PC-3 (cell line): ENCODE measurements at regions of chr9 and their contacts with region 1.

Region 1: DNA sequence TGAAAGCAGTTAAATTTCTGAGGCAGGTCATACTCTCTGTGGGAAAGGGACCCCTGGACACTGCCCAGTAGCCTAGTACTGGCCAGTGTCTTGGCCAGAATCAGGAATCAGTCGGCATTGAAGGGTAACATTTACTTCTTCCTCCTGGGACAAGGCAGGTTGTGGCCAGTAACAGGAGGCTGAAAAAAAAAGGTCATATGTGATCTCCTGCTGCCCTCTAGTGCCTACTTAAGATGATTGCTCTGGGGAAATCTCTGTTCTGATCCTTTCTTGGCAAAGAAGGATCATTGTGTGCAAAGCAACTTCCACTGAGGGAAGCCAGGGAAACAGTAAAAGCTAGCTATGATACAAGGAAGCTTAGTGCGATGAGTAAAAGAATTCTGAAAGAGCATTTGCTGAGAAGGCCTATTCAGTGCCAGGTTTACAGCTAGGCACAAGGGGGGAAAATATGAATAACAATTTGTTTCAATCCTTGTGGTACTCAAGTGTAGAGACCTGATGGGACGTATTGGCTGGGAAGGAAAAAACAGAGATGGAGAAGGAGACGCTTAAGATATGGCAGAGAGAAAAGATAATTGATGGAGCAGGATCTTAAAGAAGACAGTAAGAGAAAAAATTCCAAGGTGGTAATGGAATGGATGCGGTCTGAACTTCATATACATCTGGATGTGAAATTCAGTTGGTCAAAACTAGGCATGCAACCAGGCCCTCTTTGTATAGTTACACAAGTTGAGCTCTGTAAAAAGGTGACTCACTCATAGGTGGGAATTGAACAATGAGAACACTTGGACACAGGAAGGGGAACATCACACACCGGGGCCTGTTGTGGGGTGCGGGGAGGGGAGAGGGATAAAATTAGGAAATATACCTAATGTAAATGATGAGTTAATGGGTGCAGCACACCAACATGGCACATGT is 25.8 kb upstream of the TRIM32 start:
- DNase-seq: peak; percentile 58
- ATAC-seq: peak; percentile 81
- H3K4me3 ChIP-seq: no peak overlapping the region
- H3K27ac ChIP-seq: no peak overlapping the region
- H3K4me1 ChIP-seq: peaks cover 7% of the 10 kb centered on the region; the same call in 1 of the 2 replicates
- H3K27me3 ChIP-seq: no peaks in the 10 kb centered on the region
- CTCF ChIP-seq: peak; percentile 78

Region 2: DNA sequence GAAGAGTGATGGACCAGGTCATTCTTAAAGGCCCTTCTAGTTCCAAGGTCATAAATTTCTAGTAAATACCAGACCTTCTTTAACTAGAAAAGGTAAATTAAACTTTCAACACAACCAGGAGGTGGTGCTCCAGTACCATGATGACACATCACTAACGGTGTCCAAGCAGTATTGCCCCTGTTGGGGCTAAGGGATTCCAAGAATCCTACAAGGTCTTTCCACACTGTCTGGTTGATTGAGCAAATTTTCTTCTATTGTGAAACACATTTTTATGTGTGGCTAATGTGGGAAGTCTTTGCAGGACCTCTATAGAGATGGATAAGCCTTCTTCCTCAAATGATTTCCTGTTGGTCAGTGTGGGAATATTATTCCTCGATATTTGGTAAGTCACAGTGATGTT is 967.3 kb before region 1 on chr9:
- CTCF ChIA-PET with region 1: no interaction called
- POLR2A ChIA-PET with region 1: no interaction called
- intact Hi-C with region 1: loop called (anchors 2 kb)
- DNase-seq: peak; percentile 61
- ATAC-seq: no peak; the same call in 1 of the 2 replicates
- H3K4me3 ChIP-seq: no peak overlapping the region
- H3K27ac ChIP-seq: no peak overlapping the region
- H3K4me1 ChIP-seq: peaks cover 21% of the 10 kb centered on the region
- H3K27me3 ChIP-seq: no peaks in the 10 kb centered on the region
- CTCF ChIP-seq: peak; percentile 65

Region 3: GRCh38 chr9:116163293-116164055 is 497.8 kb before region 1 on chr9:
- CTCF ChIA-PET with region 1: no interaction called
- POLR2A ChIA-PET with region 1: no interaction called
- intact Hi-C with region 1: loop called (anchors 2 kb)
- DNase-seq: peak; percentile 49
- ATAC-seq: no peak
- H3K4me3 ChIP-seq: no peak overlapping the region
- H3K27ac ChIP-seq: no peak overlapping the region
- H3K4me1 ChIP-seq: no peaks in the 10 kb centered on the region
- H3K27me3 ChIP-seq: no peaks in the 10 kb centered on the region
- CTCF ChIP-seq: peak; percentile 61

Region 4: DNA sequence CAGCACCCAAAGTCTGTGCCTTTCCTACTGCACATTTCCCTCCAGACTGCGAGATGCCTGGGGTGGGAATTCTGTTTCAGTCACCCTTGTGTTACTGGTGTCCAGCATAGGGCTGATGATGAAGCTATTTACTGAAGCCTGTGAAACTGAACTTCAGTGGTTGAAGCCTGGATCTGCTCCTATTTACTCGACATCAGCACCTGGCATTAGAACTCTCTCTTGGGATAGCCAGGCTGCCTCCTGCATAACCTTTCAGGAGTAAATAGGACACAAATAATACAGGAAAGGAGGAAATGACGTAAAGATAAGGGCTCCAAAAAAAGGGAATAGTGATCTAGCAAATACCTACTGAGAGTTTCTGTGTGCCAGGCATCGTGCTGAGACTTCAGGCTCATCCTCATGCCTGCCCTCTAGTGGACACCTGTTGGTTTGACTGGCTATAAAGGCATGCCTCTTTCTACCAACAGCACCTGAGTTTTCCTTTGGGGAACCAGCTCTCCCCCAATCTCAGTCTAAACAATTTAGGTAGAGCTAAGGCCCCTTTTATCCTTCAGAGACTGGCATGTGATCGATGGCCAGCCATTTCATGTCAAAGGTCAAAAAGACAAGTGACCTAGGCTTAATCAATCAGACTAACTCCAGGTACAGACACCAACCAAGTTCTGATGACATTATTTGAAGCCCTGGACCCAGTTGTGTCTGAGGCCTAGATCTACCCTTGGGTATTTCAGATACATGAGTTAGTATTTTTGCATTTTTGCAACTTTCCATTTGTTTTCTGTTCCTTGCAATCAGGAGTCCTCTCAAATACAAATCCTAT is 166.3 kb before region 1 on chr9:
- CTCF ChIA-PET with region 1: no interaction called
- POLR2A ChIA-PET with region 1: no interaction called
- intact Hi-C with region 1: loop called (anchors 5 kb)
- DNase-seq: peak; percentile 46
- ATAC-seq: peak; percentile 28; the same call in 1 of the 2 replicates
- H3K4me3 ChIP-seq: no peak overlapping the region
- H3K27ac ChIP-seq: no peak overlapping the region
- H3K4me1 ChIP-seq: no peaks in the 10 kb centered on the region
- H3K27me3 ChIP-seq: no peaks in the 10 kb centered on the region
- CTCF ChIP-seq: peak; percentile 69

Region 5: GRCh38 chr9:116589392-116590354 is 71.6 kb before region 1 on chr9:
- CTCF ChIA-PET with region 1: no interaction called
- POLR2A ChIA-PET with region 1: no interaction called
- intact Hi-C with region 1: loop called (anchors 1 kb)
- DNase-seq: peak; percentile 76
- ATAC-seq: peak; percentile 91
- H3K4me3 ChIP-seq: no peak overlapping the region
- H3K27ac ChIP-seq: no peak overlapping the region
- H3K4me1 ChIP-seq: no peaks in the 10 kb centered on the region
- H3K27me3 ChIP-seq: no peaks in the 10 kb centered on the region
- CTCF ChIP-seq: peak; percentile 81

Region 6: GRCh38 chr9:116605904-116606341 is 55.4 kb before region 1 on chr9:
- CTCF ChIA-PET with region 1: no interaction called
- POLR2A ChIA-PET with region 1: no interaction called
- intact Hi-C with region 1: no loop called
- DNase-seq: no peak
- ATAC-seq: no peak
- H3K4me3 ChIP-seq: no peak overlapping the region
- H3K27ac ChIP-seq: no peak overlapping the region
- H3K4me1 ChIP-seq: no peaks in the 10 kb centered on the region
- H3K27me3 ChIP-seq: no peaks in the 10 kb centered on the region
- CTCF ChIP-seq: no peak

Region 7: DNA sequence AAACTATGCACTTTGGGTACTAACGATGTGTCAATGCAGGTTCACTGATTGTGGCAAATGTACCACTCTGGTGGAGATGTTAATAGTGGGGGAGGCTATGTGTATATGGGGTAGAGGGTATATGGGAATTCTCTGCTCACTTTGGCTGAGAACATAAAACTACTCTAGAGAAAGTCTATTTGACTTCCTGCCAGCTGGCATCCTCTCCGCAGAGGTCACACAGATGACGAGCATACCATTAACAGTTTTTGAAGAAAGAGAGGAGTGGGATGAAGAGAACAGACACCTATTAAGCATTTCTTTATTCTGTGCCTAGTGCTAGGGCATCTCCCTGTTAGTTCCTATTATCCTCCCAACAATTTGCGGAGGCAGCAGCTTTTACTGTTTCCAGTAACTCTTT is 32.6 kb before region 1 on chr9:
- CTCF ChIA-PET with region 1: no interaction called
- POLR2A ChIA-PET with region 1: no interaction called
- intact Hi-C with region 1: no loop called
- DNase-seq: no peak
- ATAC-seq: no peak
- H3K4me3 ChIP-seq: no peak overlapping the region
- H3K27ac ChIP-seq: no peak overlapping the region
- H3K4me1 ChIP-seq: no peaks in the 10 kb centered on the region
- H3K27me3 ChIP-seq: no peaks in the 10 kb centered on the region
- CTCF ChIP-seq: no peak

Region 8: GRCh38 chr9:116713271-116713670 is 52.0 kb after region 1 on chr9:
- CTCF ChIA-PET with region 1: no interaction called
- POLR2A ChIA-PET with region 1: no interaction called
- intact Hi-C with region 1: no loop called
- DNase-seq: no peak
- ATAC-seq: no peak
- H3K4me3 ChIP-seq: no peak overlapping the region
- H3K27ac ChIP-seq: no peak overlapping the region
- H3K4me1 ChIP-seq: no peaks in the 10 kb centered on the region
- H3K27me3 ChIP-seq: no peaks in the 10 kb centered on the region
- CTCF ChIP-seq: no peak